ENCODE measurements at regions of chr1 and their contacts with region 1.

Region 1: GRCh38 chr1:214146523-214146922 is 134.4 kb upstream of the SMYD2 start:
- DNase-seq: no peak
- ATAC-seq: no peak
- H3K4me3 ChIP-seq: no peak overlapping the region
- H3K27ac ChIP-seq: no peak overlapping the region
- H3K4me1 ChIP-seq: no peaks in the 10 kb centered on the region
- H3K27me3 ChIP-seq: no peaks in the 10 kb centered on the region
- CTCF ChIP-seq: no peak
- POLR2A ChIP-seq: no peak

Region 2: DNA sequence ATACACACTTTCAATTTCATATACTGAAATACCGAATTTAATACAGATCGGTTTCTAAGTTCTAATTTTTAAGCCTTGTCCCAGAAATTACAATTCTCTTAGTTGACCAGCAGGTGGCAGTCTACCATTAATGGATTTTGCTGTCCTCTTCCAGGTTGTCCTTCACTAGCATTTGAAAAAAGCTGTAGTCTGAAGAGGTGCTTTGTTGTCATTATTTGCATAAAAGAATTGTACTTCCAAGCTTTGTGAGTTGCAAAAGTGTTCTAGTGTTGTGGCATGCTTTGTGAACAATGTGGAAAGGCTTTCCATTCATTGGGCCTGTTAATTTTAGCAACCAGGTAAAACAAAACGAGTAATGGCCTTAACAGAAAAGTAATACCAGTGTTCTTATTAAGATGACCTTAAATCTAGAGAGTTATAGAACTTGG is 901.8 kb before region 1 on chr1:
- in situ Hi-C with region 1: loop called in 2 of 4 experiments (anchors 25 kb)
- intact Hi-C with region 1: no loop called
- DNase-seq: no peak
- ATAC-seq: no peak
- H3K4me3 ChIP-seq: no peak overlapping the region
- H3K27ac ChIP-seq: no peak overlapping the region
- H3K4me1 ChIP-seq: no peaks in the 10 kb centered on the region
- H3K27me3 ChIP-seq: no peaks in the 10 kb centered on the region
- CTCF ChIP-seq: peak; percentile 46 to 76 (median 62)
- POLR2A ChIP-seq: no peak

Region 3: DNA sequence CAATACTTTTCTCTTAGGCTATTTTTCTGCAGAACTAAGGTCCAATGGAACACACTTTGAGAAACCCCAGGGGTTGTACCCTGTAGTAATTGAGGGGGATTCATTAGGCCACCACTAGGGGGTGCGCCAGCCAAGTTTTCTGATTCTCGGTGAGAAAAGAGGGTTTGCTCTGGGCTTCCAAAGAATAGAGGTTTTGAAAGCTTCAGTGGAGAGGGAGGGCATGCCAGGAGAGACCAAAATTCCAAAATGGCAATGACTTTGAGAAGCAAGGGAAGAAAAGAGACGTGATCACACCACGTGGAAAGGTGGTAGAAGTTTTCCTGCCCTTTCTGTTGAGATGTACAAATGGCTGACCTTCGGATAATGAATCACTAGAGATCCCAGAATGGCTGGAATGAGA is 772.2 kb before region 1 on chr1:
- in situ Hi-C with region 1: loop called in 2 of 4 experiments (anchors 25 kb)
- intact Hi-C with region 1: no loop called
- DNase-seq: peak in 1 of 2 donors; percentile 17
- ATAC-seq: peak; percentile 66 to 68
- H3K4me3 ChIP-seq: no peak overlapping the region
- H3K27ac ChIP-seq: no peak overlapping the region
- H3K4me1 ChIP-seq: no peaks in the 10 kb centered on the region
- H3K27me3 ChIP-seq: no peaks in the 10 kb centered on the region
- CTCF ChIP-seq: peak; percentile 53 to 78 (median 68)
- POLR2A ChIP-seq: no peak

Region 4: GRCh38 chr1:213586587-213586972 is 559.9 kb before region 1 on chr1:
- in situ Hi-C with region 1: no loop called
- intact Hi-C with region 1: no loop called
- DNase-seq: no peak
- ATAC-seq: no peak
- H3K4me3 ChIP-seq: no peak overlapping the region
- H3K27ac ChIP-seq: no peak overlapping the region
- H3K4me1 ChIP-seq: no peaks in the 10 kb centered on the region
- H3K27me3 ChIP-seq: peaks cover 0 to 2% (median 0%) of the 10 kb centered on the region in 3 donors
- CTCF ChIP-seq: no peak
- POLR2A ChIP-seq: no peak

Region 5: DNA sequence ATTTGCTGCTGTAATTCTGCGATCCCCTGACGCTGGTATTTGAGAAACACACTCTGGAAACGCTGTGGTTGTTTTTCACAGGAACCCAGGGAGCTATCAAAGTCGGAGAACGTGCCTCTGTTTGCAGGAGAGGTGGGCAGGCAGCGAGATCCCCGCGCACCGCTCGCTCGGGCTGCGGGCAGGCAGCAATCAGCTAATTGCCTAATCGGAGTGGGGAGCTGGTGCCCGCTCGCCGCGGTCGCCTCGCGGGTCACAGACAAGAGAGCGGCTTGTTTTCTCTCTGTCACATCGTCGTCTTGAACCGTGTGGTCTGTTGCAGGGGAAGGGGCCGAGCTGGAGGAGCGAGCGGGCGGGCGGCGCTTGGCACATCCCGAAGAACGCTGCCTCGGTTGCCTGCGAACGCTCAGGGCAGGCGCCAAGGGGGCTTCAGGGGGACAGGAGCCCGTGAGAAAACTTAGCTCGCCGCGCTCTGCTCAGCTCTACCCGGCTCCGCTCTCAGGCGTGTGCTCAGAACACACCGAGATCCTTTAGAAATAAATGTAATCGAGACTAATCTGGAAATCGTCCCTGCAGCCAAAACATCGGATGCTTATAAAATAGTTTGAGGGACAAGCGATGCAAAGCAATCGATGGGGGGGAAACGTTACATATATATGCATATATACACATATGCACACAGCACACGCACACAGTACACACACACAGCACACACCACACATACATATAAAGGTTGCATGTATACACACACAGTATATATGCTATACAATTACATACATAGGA is 40.8 kb after region 1 on chr1:
- in situ Hi-C with region 1: no loop called
- intact Hi-C with region 1: no loop called
- DNase-seq: no peak
- ATAC-seq: no peak
- H3K4me3 ChIP-seq: peak overlapping the region; percentile 34 to 62 (median 38)
- H3K27ac ChIP-seq: no peak overlapping the region
- H3K4me1 ChIP-seq: peaks cover 4 to 5% of the 10 kb centered on the region in 2 donors
- H3K27me3 ChIP-seq: peaks cover 34 to 64% (median 34%) of the 10 kb centered on the region in 3 donors
- CTCF ChIP-seq: no peak
- POLR2A ChIP-seq: no peak

Measured in gastrocnemius medialis (tissue), 4 donors.